ENCODE measurements at regions of chr11 and their contacts with region 1.

Region 1: GRCh38 chr11:4187055-4187988 is 92.7 kb downstream of the RRM1 start:
- DNase-seq: peak; percentile 76 to 85 (median 81)
- H3K4me3 ChIP-seq: peak overlapping the region; percentile 52 to 81 (median 64)
- H3K27ac ChIP-seq: no peak overlapping the region
- H3K4me1 ChIP-seq: peaks cover 0 to 23% (median 15%) of the 10 kb centered on the region in 4 experiments
- H3K27me3 ChIP-seq: peaks cover 0 to 4% (median 0%) of the 10 kb centered on the region in 5 experiments

Region 2: DNA sequence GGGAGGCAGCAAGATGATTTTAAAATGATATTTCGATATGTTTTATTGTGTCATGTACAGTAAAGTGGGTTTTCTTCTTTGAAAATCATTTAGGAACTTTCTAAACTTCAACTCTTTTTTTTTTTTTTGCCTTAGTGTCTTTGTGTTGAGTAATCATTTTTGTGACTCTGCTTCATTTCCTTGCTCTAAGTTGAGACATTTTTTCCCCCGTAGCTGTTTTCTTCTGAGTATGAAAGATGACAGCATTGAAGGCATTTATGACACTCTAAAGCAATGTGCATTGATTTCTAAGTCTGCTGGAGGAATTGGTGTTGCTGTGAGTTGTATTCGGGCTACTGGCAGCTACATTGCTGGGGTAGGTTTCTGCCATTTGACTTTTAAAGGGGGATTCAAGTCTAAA is 69.2 kb before region 1 on chr11:
- CTCF ChIA-PET with region 1: no interaction called
- POLR2A ChIA-PET with region 1: no interaction called
- DNase-seq: no peak
- H3K4me3 ChIP-seq: no peak overlapping the region
- H3K27ac ChIP-seq: no peak overlapping the region
- H3K4me1 ChIP-seq: no peaks in the 10 kb centered on the region
- H3K27me3 ChIP-seq: no peaks in the 10 kb centered on the region

Region 3: GRCh38 chr11:4138497-4138896 is 48.8 kb before region 1 on chr11:
- CTCF ChIA-PET with region 1: no interaction called
- POLR2A ChIA-PET with region 1: no interaction called
- DNase-seq: no peak
- H3K4me3 ChIP-seq: no peak overlapping the region
- H3K27ac ChIP-seq: no peak overlapping the region
- H3K4me1 ChIP-seq: no peaks in the 10 kb centered on the region
- H3K27me3 ChIP-seq: no peaks in the 10 kb centered on the region

Region 4: GRCh38 chr11:4167758-4168157 is 19.6 kb before region 1 on chr11:
- CTCF ChIA-PET with region 1: no interaction called
- POLR2A ChIA-PET with region 1: no interaction called
- DNase-seq: no peak
- H3K4me3 ChIP-seq: no peak overlapping the region
- H3K27ac ChIP-seq: no peak overlapping the region
- H3K4me1 ChIP-seq: no peaks in the 10 kb centered on the region
- H3K27me3 ChIP-seq: no peaks in the 10 kb centered on the region

Region 5: GRCh38 chr11:4203603-4204360 is 16.5 kb after region 1 on chr11:
- CTCF ChIA-PET with region 1: interaction called, 10 read pairs
- POLR2A ChIA-PET with region 1: interaction called, 4 read pairs
- DNase-seq: no peak
- H3K4me3 ChIP-seq: no peak overlapping the region
- H3K27ac ChIP-seq: no peak overlapping the region
- H3K4me1 ChIP-seq: no peaks in the 10 kb centered on the region
- H3K27me3 ChIP-seq: peaks cover 0 to 5% (median 0%) of the 10 kb centered on the region in 5 experiments

Region 6: DNA sequence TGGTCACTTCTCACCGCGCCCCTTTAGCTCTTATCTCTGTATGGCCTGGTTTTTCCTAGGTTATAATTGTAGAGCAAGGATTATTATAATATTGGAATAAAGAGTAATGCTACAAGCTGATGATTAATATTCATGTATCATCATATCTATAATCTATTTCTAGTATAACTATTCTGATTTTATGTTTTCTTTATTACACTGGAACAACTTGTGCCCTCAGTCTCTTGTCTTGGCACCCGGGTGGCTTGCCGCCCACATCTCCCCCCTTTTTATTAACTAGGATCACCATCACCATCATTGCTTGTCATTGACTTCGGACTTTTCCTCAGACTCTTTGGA is 306.1 kb after region 1 on chr11:
- CTCF ChIA-PET with region 1: interaction called, 62 read pairs
- POLR2A ChIA-PET with region 1: no interaction called
- DNase-seq: no peak
- H3K4me3 ChIP-seq: no peak overlapping the region
- H3K27ac ChIP-seq: no peak overlapping the region
- H3K4me1 ChIP-seq: no peaks in the 10 kb centered on the region
- H3K27me3 ChIP-seq: peaks cover 0 to 12% (median 3%) of the 10 kb centered on the region in 5 experiments

Region 7: GRCh38 chr11:4539603-4540219 is 352.4 kb after region 1 on chr11:
- CTCF ChIA-PET with region 1: interaction called, 177 read pairs
- POLR2A ChIA-PET with region 1: no interaction called
- DNase-seq: peak; percentile 32 to 63 (median 55)
- H3K4me3 ChIP-seq: no peak overlapping the region
- H3K27ac ChIP-seq: no peak overlapping the region
- H3K4me1 ChIP-seq: no peaks in the 10 kb centered on the region
- H3K27me3 ChIP-seq: peaks cover 0 to 7% (median 0%) of the 10 kb centered on the region in 5 experiments

Region 8: GRCh38 chr11:4826425-4826824 is 639.1 kb after region 1 on chr11:
- CTCF ChIA-PET with region 1: interaction called, 11 read pairs
- POLR2A ChIA-PET with region 1: no interaction called
- DNase-seq: peak; percentile 16 to 54 (median 33)
- H3K4me3 ChIP-seq: no peak overlapping the region
- H3K27ac ChIP-seq: no peak overlapping the region
- H3K4me1 ChIP-seq: no peaks in the 10 kb centered on the region
- H3K27me3 ChIP-seq: peaks cover 0 to 2% (median 0%) of the 10 kb centered on the region in 5 experiments